PC-9 (cell line): ENCODE measurements at regions of chr12 and their contacts with region 1.

Region 1: GRCh38 chr12:9039397-9039977 is 50.1 kb downstream of the KLRG1 start:
- DNase-seq: peak in 1 of 2 experiments; percentile 52
- H3K4me3 ChIP-seq: no peak overlapping the region
- H3K27ac ChIP-seq: no peak overlapping the region
- H3K4me1 ChIP-seq: no peaks in the 10 kb centered on the region
- H3K27me3 ChIP-seq: no peaks in the 10 kb centered on the region
- CTCF ChIP-seq: peak; percentile 85

Region 2: DNA sequence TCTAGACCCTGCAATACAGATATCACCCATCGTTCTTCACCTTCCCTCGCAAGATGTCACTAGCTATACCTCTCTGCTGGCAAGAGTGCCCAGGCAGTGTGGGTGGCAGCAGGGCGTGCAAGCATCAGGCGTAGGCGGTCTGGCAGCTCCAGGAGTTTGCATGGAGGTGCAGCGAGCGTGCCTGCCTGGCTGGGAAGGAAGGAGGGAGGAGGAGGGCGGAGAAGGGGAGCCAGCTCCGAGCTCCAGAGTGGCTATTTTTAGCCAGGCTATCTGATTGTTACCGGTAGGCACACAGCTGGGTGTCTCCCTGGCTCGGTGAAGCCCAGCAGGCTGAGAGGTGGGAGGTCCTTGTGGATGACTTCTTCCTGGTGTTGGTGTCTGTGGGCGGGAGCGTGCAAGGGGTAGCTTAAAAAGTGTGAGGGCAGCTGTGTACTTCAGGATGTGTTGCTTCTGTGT is 1000.8 kb before region 1 on chr12:
- CTCF ChIA-PET with region 1: no interaction called
- POLR2A ChIA-PET with region 1: interaction called, 11 read pairs
- intact Hi-C with region 1: no loop called
- DNase-seq: peak in 1 of 2 experiments; percentile 70
- H3K4me3 ChIP-seq: no peak overlapping the region
- H3K27ac ChIP-seq: no peak overlapping the region
- H3K4me1 ChIP-seq: peaks cover 32% of the 10 kb centered on the region
- H3K27me3 ChIP-seq: no peaks in the 10 kb centered on the region
- CTCF ChIP-seq: no peak

Region 3: DNA sequence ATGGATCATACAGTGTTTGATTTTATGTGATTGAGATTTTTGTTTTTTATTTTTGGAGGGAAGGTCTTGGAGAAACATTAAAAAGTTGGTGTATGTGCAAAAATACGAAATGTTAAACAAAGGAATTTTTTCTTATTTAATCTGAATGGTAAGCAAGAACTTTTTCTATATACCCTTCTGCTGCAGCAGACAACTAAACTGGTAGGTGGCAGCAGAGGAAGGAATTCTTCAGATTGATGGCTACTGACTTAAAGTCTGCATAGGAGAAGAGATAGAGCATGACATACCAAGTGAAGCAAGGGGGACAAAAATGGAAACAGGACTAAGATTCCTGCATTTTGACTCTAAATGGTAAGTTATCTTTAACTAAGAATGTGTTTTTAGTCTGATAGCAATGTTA is 259.1 kb before region 1 on chr12:
- CTCF ChIA-PET with region 1: no interaction called
- POLR2A ChIA-PET with region 1: no interaction called
- intact Hi-C with region 1: loop called (anchors 2 kb)
- DNase-seq: peak; percentile 20 to 46
- H3K4me3 ChIP-seq: no peak overlapping the region
- H3K27ac ChIP-seq: no peak overlapping the region
- H3K4me1 ChIP-seq: no peaks in the 10 kb centered on the region
- H3K27me3 ChIP-seq: no peaks in the 10 kb centered on the region
- CTCF ChIP-seq: peak; percentile 53; the same call in 1 of the 2 replicates

Region 4: DNA sequence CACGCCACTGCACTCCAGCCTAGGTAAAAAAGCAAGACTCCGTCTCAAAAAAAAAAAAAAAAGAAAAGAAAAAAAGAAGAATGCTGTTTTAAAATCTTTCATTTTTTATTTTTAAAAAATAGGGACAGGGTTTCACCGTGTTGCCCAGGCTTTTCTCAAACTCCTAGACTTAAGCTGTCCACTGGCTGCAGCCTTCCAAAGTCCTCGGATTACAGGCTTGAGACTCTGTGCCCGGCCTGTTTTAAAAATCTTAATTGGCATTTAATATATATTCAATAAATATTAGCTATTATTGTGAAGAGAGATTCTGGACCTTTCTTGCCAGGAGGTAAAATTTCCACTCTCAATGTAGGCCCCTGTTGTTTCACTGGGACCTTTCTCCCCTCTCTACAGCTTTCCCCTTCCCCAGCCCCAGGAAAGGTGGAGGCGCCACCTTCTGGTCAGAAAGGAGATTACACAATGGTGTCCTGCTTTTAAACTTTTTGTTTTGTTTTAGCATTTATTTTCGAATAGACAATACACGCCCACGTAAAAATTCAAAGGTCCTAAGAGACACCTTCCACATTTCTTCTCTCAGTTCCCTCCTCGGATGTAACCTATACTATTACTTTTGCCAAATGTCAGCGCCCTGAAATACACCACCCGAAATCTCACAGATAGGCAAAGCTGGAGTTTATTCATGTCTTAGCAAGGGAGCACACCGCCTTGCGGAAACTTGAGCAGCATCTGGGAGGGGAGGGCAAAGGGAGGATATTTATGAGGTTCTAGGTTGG is 149.0 kb before region 1 on chr12:
- CTCF ChIA-PET with region 1: no interaction called
- POLR2A ChIA-PET with region 1: no interaction called
- intact Hi-C with region 1: loop called (anchors 2 kb)
- DNase-seq: peak in 1 of 2 experiments; percentile 63
- H3K4me3 ChIP-seq: peak overlapping the region; percentile 43; the same call in 1 of the 2 replicates
- H3K27ac ChIP-seq: no peak overlapping the region
- H3K4me1 ChIP-seq: 0 out of 2 replicates have a peak, but pooled peaks cover 3% of the 10 kb centered on the region
- H3K27me3 ChIP-seq: no peaks in the 10 kb centered on the region
- CTCF ChIP-seq: peak; percentile 95

Region 5: DNA sequence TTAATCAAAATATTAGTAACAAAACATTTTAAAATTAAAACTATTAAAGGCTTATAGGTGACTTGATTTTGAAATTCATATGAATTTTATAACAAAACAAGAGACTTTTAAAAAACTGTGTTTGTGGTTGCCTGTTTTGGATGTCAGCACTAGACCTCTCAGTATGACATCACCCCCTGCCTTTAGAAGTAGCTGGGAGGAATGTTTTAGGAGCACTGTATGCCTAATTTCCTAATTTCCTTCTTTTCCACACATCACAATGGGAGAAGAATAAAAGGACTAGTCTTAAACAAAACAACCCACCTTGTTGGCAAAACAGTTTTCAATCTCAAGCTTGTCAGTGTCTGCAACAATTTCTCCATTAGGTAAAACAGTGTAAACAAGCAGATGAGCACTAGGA is 216.9 kb after region 1 on chr12:
- CTCF ChIA-PET with region 1: no interaction called
- POLR2A ChIA-PET with region 1: no interaction called
- intact Hi-C with region 1: no loop called
- DNase-seq: no peak
- H3K4me3 ChIP-seq: no peak overlapping the region
- H3K27ac ChIP-seq: no peak overlapping the region
- H3K4me1 ChIP-seq: no peaks in the 10 kb centered on the region
- H3K27me3 ChIP-seq: peaks cover 31% of the 10 kb centered on the region
- CTCF ChIP-seq: no peak